Heart right ventricle (tissue), 16 donors: ENCODE measurements at regions of chr14 and their contacts with region 1.

Region 1: DNA sequence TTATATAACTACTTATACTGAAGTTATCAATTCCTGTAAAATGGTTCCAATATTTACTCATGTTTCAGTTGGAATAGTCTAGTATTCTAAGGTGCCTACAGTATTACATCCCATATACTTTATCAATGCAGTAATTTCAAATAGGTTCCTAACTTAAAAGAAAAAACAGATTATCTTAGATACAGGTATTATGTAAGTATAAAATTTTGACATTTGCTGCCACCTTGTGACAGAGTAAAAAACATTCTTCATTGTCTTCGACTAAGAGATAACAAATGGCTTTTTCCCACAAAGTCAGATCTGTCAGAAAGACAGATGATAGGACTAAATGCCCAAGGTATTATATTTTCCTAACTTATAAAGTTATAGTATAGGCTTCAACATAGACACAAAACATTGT is 78.7 kb downstream of the TXNDC16 start:
- DNase-seq: no peak
- ATAC-seq: no peak
- H3K4me3 ChIP-seq: no peak overlapping the region
- H3K27ac ChIP-seq: no peak overlapping the region
- H3K4me1 ChIP-seq: no peaks in the 10 kb centered on the region
- H3K27me3 ChIP-seq: no peaks in the 10 kb centered on the region
- CTCF ChIP-seq: peak in 8 of 9 donors; percentile 12 to 53 (median 44)

Region 2: DNA sequence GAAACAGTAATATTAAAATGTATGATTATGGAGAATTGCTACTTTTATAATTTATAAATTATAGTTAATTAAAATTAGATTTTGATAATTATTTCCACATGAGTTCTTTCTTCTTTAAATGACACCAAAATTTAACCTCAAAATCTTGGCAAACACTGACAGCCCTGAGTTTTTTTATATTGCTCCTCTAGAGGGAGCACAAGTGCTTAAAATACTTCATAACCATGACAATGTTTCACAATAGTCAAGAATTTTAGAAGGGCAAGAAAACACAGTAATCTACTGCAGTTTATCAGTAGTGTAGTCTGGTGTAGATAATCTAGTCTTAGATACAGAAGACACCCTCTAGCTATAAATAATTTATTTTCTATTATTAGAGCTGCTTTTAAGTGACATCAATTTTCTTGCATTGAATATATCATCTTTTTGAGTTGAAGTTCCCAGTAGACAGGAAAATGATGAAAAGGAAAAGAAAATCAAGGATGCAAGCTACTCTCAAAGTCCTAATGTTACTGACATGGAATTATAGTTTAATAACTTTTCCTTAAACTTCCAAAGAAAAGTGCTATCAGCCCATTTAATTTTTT is 173.8 kb before region 1 on chr14:
- intact Hi-C with region 1: loop called (anchors 2 to 5 kb)
- DNase-seq: no peak
- ATAC-seq: peak in 5 of 8 donors; percentile 28 to 72 (median 52)
- H3K4me3 ChIP-seq: no peak overlapping the region
- H3K27ac ChIP-seq: no peak overlapping the region
- H3K4me1 ChIP-seq: peaks cover 0 to 19% (median 0%) of the 10 kb centered on the region in 9 donors
- H3K27me3 ChIP-seq: no peaks in the 10 kb centered on the region
- CTCF ChIP-seq: peak; percentile 50 to 84 (median 77)

Region 3: DNA sequence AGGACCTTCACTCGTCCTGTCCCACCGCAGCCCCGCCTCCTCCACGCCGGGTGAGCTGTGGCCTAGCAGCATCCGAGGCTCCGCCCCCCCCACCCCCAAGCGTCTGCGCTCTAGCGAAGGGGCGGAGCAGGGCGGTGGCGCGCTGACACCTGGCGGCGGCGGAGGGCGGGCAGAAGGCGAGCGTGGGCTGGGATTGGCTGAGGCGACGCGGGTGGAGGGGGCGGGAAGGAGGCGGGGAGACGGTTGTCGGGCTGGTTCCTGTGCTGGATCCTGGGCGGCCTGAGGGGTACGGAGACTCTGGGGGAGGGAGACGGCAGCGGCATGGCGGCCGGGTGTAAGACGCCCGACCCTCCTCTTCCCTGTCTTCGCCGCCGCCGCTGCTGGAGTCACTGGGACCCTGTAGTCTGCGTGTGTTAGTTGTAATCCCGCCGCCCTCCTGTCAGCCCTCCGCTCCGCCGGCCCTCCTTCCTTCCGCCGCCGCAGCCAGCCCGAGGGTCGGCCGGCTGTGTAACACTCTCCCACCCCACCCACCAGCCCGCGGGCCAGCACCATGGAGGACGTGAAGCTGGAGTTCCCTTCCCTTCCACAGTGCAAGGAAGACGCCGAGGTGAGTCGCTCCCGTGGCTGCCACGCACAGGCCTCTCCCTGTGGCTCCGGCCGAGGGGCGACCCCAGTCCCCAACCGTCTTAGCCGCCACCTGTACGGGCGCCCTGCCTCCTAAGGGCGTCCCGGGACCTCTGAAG is 256.5 kb after region 1 on chr14 and contains the start of gene STYX:
- intact Hi-C with region 1: no loop called
- DNase-seq: peak; percentile 99
- ATAC-seq: peak; percentile 99 to 100 (median 99)
- H3K4me3 ChIP-seq: peak within 1 kb of the TSS; percentile 62 to 95 (median 92)
- H3K27ac ChIP-seq: peak within 1 kb of the TSS; percentile 38 to 94 (median 90)
- H3K4me1 ChIP-seq: peaks cover 0 to 18% (median 11%) of the 10 kb centered on the region in 9 donors
- H3K27me3 ChIP-seq: no peaks in the 10 kb centered on the region
- CTCF ChIP-seq: peak in 7 of 9 donors; percentile 23 to 49 (median 32)
- total RNA-seq, gene STYX: 12.9 to 15.8 (median 14.2) TPM